Cardiac septum (tissue), 1 donor: ENCODE measurements at regions of chr12 and their contacts with region 1.

Region 1: DNA sequence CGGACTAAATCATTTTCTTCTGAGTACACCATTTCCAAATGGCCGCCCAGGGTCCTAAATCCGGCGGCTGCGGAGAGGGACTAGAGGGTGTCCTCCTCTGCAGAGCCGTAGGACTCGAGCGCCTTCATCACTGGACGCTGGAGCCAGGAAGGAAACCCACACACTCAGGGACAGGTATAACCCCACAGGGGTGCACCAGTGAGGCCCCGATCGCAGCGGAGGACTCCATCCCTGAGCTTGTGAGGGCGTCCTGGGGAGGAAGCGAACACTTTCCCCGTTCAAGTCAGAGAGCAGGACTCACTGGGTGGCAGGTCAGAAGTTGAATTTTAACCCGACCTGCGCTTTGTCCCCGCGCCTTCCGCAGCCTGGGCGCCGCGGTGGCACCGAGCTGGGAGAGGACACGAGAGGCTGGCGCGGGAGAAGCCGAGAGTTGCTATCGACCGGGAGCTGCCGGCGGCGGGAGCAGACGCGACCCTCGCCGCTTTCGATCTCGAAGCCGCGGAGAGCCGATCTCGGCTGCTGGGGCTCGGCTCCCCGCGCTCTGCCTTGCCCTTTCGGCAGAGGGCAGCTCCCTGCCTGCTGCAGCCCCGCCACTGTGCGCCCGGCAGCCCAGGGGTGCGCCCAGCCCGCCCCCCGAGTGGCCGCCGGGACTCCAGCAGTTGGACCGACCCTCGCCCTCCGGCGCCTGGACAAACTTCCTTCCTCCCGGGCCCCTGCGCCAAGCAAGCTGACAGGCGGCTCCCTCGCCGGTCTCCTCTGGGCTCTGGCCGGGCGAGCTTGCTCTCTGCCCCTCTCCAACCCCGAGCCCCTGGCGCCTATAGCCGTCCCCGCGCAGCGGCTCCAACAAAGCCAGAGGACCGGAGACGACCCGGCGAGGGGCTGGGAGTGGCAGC is 990 bp downstream of the LIN7A start:
- DNase-seq: peak; percentile 85

Region 2: DNA sequence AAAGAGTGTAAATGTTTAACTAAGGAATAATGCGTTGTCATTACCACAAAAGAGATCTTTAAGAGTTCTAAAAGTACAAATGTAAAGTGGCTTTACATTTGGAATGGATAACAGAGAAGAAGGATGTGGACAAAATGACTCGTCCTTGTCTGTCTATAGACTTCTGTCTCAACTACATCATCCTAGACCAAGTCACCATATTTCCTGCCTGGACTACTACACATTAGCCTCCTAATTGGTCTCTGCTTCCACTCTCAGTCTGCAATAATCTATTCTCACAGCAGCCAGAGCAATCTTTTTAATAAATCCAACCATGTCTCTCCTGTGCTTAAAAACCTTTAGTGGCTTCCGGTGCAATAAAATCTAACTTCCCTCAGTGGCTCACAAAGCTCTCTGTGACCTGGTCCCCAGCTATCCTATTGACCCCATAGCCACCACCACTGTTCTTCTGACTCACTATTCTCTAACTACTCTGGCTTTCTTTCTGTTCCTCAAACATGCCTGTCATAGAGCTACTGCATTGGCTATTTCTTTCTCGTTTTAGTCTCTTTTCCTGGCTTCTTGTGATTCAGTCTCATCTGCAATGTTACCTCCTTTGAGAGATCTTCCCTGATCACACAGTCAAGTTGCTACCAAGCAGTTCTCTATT is 129.0 kb before region 1 on chr12:
- intact Hi-C with region 1: no loop called
- DNase-seq: no peak

Region 3: GRCh38 chr12:80837348-80837985 is 99.3 kb before region 1 on chr12:
- intact Hi-C with region 1: loop called (anchors 5 kb)
- DNase-seq: no peak

Region 4: DNA sequence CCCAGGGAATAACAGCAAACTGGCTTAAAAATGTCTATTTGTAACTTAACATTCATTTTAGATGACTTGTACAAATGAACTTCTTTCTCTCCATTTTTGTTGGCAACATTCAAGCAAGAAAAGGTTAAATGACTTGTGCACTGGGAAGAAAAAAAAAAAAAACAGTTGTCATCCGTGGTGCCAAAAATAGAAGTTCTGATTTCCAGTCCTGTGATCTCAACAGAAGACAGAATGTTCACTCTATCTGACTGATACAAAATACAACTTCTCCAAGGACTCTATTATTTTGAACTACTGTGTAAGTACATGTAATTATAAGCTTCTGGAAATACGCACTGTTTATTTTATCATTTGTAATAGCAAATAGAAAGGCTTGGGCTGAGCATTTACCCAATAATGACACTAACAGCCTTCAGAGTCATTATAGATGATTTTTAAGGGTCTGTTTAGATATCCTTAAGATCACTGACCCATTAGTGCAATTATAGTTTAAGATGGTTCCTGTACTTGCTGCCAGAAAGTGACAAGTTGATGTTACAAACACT is 59.0 kb before region 1 on chr12:
- intact Hi-C with region 1: loop called (anchors 5 kb)
- DNase-seq: no peak

Region 5: GRCh38 chr12:81077686-81078441 is 141.1 kb after region 1 on chr12 and contains the start of gene ACSS3:
- intact Hi-C with region 1: loop called (anchors 5 kb)
- DNase-seq: peak; percentile 84
- total RNA-seq, gene ACSS3: 26.7 TPM

Region 6: DNA sequence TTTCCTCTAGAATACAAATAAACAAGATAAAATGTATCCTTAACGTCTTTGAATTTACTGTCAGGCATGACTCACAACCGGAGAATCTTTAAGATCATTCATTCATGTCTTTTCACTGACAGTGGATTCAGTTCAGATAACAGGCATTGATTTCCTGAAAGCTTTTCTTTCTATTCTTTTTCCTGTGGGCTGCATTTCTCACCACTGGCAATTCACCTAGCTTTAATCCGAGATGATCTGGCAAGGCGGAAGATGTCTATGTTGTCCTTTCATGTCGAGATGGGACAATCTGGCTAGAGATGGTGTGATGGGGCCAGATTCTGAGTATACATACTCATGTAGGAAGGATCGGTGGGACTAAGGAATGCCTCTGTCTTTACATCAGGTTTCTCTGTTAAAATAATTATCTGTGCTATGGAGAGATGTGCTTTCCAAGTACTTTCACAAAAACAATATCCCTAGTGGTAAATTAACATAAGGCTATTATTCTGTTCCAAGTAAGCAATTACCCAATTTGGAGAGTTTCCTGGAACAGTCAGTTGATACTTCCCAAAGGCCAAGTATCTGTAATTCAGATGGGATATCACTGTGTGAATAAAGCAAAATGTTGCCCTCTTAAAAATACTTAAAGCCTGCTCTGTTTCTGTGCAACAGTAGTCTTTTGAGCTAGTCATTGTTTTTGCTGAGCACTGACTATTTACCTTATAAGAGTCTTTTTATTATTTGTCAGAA is 158.9 kb after region 1 on chr12:
- intact Hi-C with region 1: no loop called
- DNase-seq: no peak